BJ (cell line): ENCODE measurements at regions of chr2 and their contacts with region 1.

Region 1: DNA sequence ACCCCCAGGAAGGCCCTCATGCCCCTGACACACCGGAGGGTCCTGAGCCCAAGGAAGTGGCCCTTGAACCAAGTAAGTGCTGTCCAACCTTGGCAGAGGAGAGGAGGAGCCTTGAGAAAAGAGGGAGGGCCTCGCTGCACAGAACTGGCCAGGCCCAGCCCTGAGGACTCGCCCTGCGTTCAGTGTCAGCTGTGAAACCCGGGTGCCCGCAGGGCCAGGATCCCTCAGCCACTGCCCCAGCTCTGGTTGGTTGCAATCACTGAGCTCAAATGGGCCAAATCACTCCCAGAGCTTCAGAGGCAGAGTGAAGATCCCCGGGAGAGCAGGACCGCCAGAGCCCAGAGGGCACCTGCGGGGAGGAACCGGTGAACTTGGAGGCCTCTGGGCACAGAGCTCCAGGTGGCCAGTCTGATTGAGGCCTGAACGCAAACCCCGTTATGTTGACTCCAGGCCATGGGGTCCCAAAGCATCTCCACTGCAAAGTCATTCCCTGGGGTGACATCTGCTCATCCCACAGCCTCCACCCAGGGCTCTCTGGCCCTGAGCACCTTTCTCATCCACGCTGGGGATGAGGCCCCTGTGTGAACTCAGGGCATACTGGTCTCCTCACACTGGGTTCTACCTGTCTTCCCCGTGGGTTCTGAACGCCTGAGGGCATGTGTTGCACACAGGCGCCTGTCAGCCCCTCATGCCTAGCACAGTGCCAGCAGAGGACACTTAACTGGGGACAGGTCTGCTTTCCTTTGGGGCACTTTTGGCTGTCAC is 11.9 kb downstream of the GBX2 start:
- DNase-seq: no peak
- H3K4me3 ChIP-seq: no peak overlapping the region
- H3K27me3 ChIP-seq: peaks cover 16% of the 10 kb centered on the region
- CTCF ChIP-seq: no peak

Region 2: DNA sequence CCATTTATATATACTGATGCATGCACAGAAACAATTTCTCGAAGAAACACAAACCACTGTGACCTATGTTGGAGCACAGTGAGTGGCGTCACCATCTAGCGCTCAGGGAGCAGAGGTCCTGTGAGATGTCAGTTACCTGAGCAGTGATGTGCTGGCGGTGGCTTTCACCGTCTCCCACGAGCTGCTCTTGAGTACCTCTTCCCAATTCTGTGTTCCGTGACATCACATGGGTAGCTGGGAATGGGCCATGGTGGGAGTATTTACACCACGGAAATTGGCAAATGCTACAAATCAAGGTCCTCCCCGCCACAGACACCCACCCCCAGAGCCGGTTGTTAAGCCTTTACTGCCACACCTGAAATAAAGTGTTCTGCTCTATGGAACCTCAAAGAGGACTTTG is 12.5 kb before region 1 on chr2:
- CTCF ChIA-PET with region 1: interaction called, 12 read pairs
- POLR2A ChIA-PET with region 1: no interaction called
- DNase-seq: no peak
- H3K4me3 ChIP-seq: no peak overlapping the region
- H3K27me3 ChIP-seq: no peaks in the 10 kb centered on the region; the same call in 1 of the 2 replicates
- CTCF ChIP-seq: no peak